B cell (primary cell): ENCODE measurements at regions of chr3 and their contacts with region 1.

Region 1: GRCh38 chr3:107235928-107236315 is 141.3 kb upstream of the CCDC54 start:
- DNase-seq: peak; percentile 78
- ATAC-seq: peak; percentile 63
- H3K4me3 ChIP-seq: peak overlapping the region in 4 of 5 experiments; percentile 2 to 35 (median 28)
- H3K4me3 Mint-ChIP-seq: peak overlapping the region; percentile 20
- H3K27ac ChIP-seq: no peak overlapping the region
- H3K27ac Mint-ChIP-seq: no peak overlapping the region
- H3K4me1 ChIP-seq: peaks cover 5 to 14% of the 10 kb centered on the region in 2 donors
- H3K4me1 Mint-ChIP-seq: peaks cover 15% of the 10 kb centered on the region
- H3K27me3 ChIP-seq: peaks cover 0 to 2% (median 0%) of the 10 kb centered on the region in 4 experiments
- H3K27me3 Mint-ChIP-seq: peaks cover 4% of the 10 kb centered on the region
- CTCF ChIP-seq: peak; percentile 98

Region 2: GRCh38 chr3:107421170-107421792 is 185.4 kb after region 1 on chr3:
- CTCF ChIA-PET with region 1: interaction called, 40 read pairs
- POLR2A ChIA-PET with region 1: no interaction called
- intact Hi-C with region 1: loop called (anchors 1 kb)
- DNase-seq: peak; percentile 63
- ATAC-seq: peak; percentile 64
- H3K4me3 ChIP-seq: peak overlapping the region in 1 of 5 experiments; percentile 33
- H3K4me3 Mint-ChIP-seq: peak overlapping the region; percentile 75
- H3K27ac ChIP-seq: no peak overlapping the region
- H3K27ac Mint-ChIP-seq: no peak overlapping the region
- H3K4me1 ChIP-seq: peaks cover 10 to 13% of the 10 kb centered on the region in 2 donors
- H3K4me1 Mint-ChIP-seq: peaks cover 16% of the 10 kb centered on the region
- H3K27me3 ChIP-seq: no peaks in the 10 kb centered on the region
- H3K27me3 Mint-ChIP-seq: peaks cover 3% of the 10 kb centered on the region
- CTCF ChIP-seq: peak; percentile 74

Region 3: GRCh38 chr3:107660306-107660976 is 424.5 kb after region 1 on chr3:
- CTCF ChIA-PET with region 1: interaction called, 6 read pairs
- POLR2A ChIA-PET with region 1: no interaction called
- intact Hi-C with region 1: loop called (anchors 1 kb)
- DNase-seq: peak; percentile 51
- ATAC-seq: no peak
- H3K4me3 ChIP-seq: no peak overlapping the region
- H3K4me3 Mint-ChIP-seq: no peak overlapping the region
- H3K27ac ChIP-seq: no peak overlapping the region
- H3K27ac Mint-ChIP-seq: no peak overlapping the region
- H3K4me1 ChIP-seq: peaks cover 8% of the 10 kb centered on the region in 2 donors
- H3K4me1 Mint-ChIP-seq: peaks cover 25% of the 10 kb centered on the region
- H3K27me3 ChIP-seq: no peaks in the 10 kb centered on the region
- H3K27me3 Mint-ChIP-seq: no peaks in the 10 kb centered on the region
- CTCF ChIP-seq: peak; percentile 83

Region 4: GRCh38 chr3:107710851-107711250 is 474.9 kb after region 1 on chr3:
- CTCF ChIA-PET with region 1: no interaction called
- POLR2A ChIA-PET with region 1: no interaction called
- intact Hi-C with region 1: no loop called
- DNase-seq: no peak
- ATAC-seq: no peak
- H3K4me3 ChIP-seq: no peak overlapping the region
- H3K4me3 Mint-ChIP-seq: no peak overlapping the region
- H3K27ac ChIP-seq: no peak overlapping the region
- H3K27ac Mint-ChIP-seq: no peak overlapping the region
- H3K4me1 ChIP-seq: no peaks in the 10 kb centered on the region
- H3K4me1 Mint-ChIP-seq: peaks cover 15% of the 10 kb centered on the region
- H3K27me3 ChIP-seq: no peaks in the 10 kb centered on the region
- H3K27me3 Mint-ChIP-seq: no peaks in the 10 kb centered on the region
- CTCF ChIP-seq: no peak

Region 5: GRCh38 chr3:107846279-107846852 is 610.4 kb after region 1 on chr3:
- CTCF ChIA-PET with region 1: interaction called, 4 read pairs
- POLR2A ChIA-PET with region 1: no interaction called
- intact Hi-C with region 1: loop called (anchors 5 kb)
- DNase-seq: peak; percentile 43
- ATAC-seq: no peak
- H3K4me3 ChIP-seq: no peak overlapping the region
- H3K4me3 Mint-ChIP-seq: no peak overlapping the region
- H3K27ac ChIP-seq: no peak overlapping the region
- H3K27ac Mint-ChIP-seq: no peak overlapping the region
- H3K4me1 ChIP-seq: no peaks in the 10 kb centered on the region
- H3K4me1 Mint-ChIP-seq: no peaks in the 10 kb centered on the region
- H3K27me3 ChIP-seq: peaks cover 0 to 3% (median 0%) of the 10 kb centered on the region in 4 experiments
- H3K27me3 Mint-ChIP-seq: peaks cover 14% of the 10 kb centered on the region
- CTCF ChIP-seq: peak; percentile 60

Region 6: GRCh38 chr3:108477511-108478147 is 1241.7 kb after region 1 on chr3:
- CTCF ChIA-PET with region 1: interaction called, 31 read pairs
- POLR2A ChIA-PET with region 1: no interaction called
- intact Hi-C with region 1: loop called (anchors 1 kb)
- DNase-seq: peak; percentile 72
- ATAC-seq: peak; percentile 77
- H3K4me3 ChIP-seq: no peak overlapping the region
- H3K4me3 Mint-ChIP-seq: no peak overlapping the region
- H3K27ac ChIP-seq: no peak overlapping the region
- H3K27ac Mint-ChIP-seq: no peak overlapping the region
- H3K4me1 ChIP-seq: peaks cover 4 to 6% of the 10 kb centered on the region in 2 donors
- H3K4me1 Mint-ChIP-seq: peaks cover 12% of the 10 kb centered on the region
- H3K27me3 ChIP-seq: no peaks in the 10 kb centered on the region
- H3K27me3 Mint-ChIP-seq: peaks cover 4% of the 10 kb centered on the region
- CTCF ChIP-seq: peak; percentile 89